Ovary (tissue), 10 donors: ENCODE measurements at regions of chr7 and their contacts with region 1.

Region 1: GRCh38 chr7:120894254-120894653 is 36.3 kb upstream of the TSPAN12 start:
- DNase-seq: no peak
- H3K4me3 ChIP-seq: no peak overlapping the region
- H3K27ac ChIP-seq: no peak overlapping the region
- H3K4me1 ChIP-seq: no peaks in the 10 kb centered on the region
- H3K27me3 ChIP-seq: no peaks in the 10 kb centered on the region
- CTCF ChIP-seq: no peak
- EP300 ChIP-seq: no peak
- POLR2A ChIP-seq: no peak

Region 2: DNA sequence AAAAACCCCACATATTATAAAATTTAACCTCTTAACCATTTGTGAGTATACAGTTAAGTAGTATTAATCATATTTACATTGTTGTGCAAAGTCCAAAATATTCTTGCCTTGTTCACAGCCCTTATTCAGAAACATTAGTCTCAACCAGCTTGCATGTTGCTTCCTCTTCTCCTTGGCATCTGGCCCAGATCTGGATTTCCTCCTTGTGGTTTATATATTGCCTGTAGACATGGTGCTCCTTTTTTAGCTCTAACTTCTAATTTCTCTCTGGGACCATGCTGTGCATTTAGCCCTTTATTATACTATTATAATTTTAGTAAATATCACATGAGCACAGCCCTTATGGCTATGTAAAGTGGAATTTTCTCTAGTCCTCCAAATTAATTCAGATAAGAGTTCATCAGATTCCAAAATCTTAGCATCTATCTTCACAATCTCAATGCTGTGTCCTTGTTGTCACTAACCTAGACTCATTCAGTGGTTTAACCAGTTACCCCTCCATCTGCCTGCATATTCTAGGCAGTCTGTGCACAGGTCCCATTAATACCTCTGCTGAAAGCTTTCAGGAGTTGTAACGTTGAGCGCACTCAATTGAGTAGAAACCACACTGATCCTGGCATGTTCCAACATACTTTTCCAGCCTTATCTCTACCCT is 102.2 kb after region 1 on chr7:
- intact Hi-C with region 1: no loop called
- DNase-seq: peak in 4 of 5 donors; percentile 31 to 79 (median 77)
- H3K4me3 ChIP-seq: no peak overlapping the region
- H3K27ac ChIP-seq: peak overlapping the region in 1 of 2 donors; percentile 11
- H3K4me1 ChIP-seq: peaks cover 13% of the 10 kb centered on the region
- H3K27me3 ChIP-seq: no peaks in the 10 kb centered on the region
- CTCF ChIP-seq: no peak
- EP300 ChIP-seq: no peak
- POLR2A ChIP-seq: no peak

Region 3: DNA sequence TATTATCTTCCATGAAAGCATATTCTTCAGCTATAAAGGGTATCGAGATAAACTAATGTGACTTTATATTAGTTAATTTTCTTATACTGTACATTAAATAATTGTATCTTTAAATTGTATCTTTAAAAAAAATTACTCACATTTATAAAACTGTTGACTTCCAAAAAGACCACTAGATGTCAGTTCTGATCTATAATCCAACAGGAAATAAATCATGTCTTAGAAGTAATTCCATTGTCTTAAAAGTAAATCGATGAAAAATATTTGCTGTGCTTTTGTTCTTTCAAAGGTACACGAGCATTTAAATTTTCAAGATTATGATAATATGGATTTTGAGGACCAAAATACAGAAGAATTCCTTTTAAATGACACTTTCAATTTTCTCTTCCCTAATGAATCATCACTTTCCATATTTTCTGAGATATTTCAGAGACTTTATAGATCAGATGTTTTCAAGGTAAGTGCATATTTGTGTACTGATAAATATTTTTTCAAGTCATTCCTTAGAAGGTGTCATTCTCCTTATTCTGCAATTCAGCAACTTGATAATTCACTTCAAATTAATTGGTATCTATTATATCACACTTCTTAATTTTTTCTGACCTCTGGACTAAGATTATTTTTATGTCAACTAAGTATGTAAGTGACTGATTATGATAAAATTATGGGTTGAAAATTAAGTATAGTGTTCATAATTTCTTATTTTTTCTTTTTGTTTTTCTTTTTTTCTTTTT is 232.7 kb after region 1 on chr7:
- intact Hi-C with region 1: no loop called
- DNase-seq: no peak
- H3K4me3 ChIP-seq: no peak overlapping the region
- H3K27ac ChIP-seq: no peak overlapping the region
- H3K4me1 ChIP-seq: no peaks in the 10 kb centered on the region
- H3K27me3 ChIP-seq: no peaks in the 10 kb centered on the region
- CTCF ChIP-seq: no peak
- EP300 ChIP-seq: no peak
- POLR2A ChIP-seq: no peak

Region 4: GRCh38 chr7:121167971-121168370 is 273.7 kb after region 1 on chr7:
- intact Hi-C with region 1: no loop called
- DNase-seq: no peak
- H3K4me3 ChIP-seq: no peak overlapping the region
- H3K27ac ChIP-seq: no peak overlapping the region
- H3K4me1 ChIP-seq: no peaks in the 10 kb centered on the region
- H3K27me3 ChIP-seq: no peaks in the 10 kb centered on the region
- CTCF ChIP-seq: no peak
- EP300 ChIP-seq: no peak
- POLR2A ChIP-seq: no peak

Region 5: GRCh38 chr7:122726881-122727280 is 1832.6 kb after region 1 on chr7:
- intact Hi-C with region 1: loop called in 1 of 4 experiments (anchors 5 kb)
- DNase-seq: no peak
- H3K4me3 ChIP-seq: no peak overlapping the region
- H3K27ac ChIP-seq: no peak overlapping the region
- H3K4me1 ChIP-seq: no peaks in the 10 kb centered on the region
- H3K27me3 ChIP-seq: no peaks in the 10 kb centered on the region
- CTCF ChIP-seq: no peak
- EP300 ChIP-seq: no peak
- POLR2A ChIP-seq: no peak